H1 (cell line): ENCODE measurements at regions of chr17 and their contacts with region 1.

Region 1: GRCh38 chr17:10527419-10527818 is 9.1 kb upstream of the MYH1 start:
- DNase-seq: no peak
- H3K4me3 ChIP-seq: no peak overlapping the region
- H3K27ac ChIP-seq: no peak overlapping the region
- H3K4me1 ChIP-seq: no peaks in the 10 kb centered on the region
- H3K27me3 ChIP-seq: no peaks in the 10 kb centered on the region
- CTCF ChIP-seq: no peak
- EP300 ChIP-seq: no peak
- POLR2A ChIP-seq: no peak
- RAD21 ChIP-seq: no peak

Region 2: GRCh38 chr17:10513299-10514067 is 13.9 kb before region 1 on chr17:
- CTCF ChIA-PET with region 1: interaction called, 22 read pairs
- POLR2A ChIA-PET with region 1: no interaction called
- DNase-seq: no peak
- H3K4me3 ChIP-seq: no peak overlapping the region
- H3K27ac ChIP-seq: no peak overlapping the region
- H3K4me1 ChIP-seq: 0 out of 7 replicates have a peak, but pooled peaks cover 0 to 2% (median under 1%) of the 10 kb centered on the region in 4 experiments
- H3K27me3 ChIP-seq: no peaks in the 10 kb centered on the region
- CTCF ChIP-seq: peak in 1 of 3 experiments; percentile 43; a peak in 1 of 4 replicates
- EP300 ChIP-seq: no peak
- POLR2A ChIP-seq: no peak
- RAD21 ChIP-seq: peak in 1 of 2 experiments; percentile 10; a peak in 1 of 4 replicates